Caco-2 (cell line): ENCODE measurements at regions of chrX and their contacts with region 1.

Region 1: DNA sequence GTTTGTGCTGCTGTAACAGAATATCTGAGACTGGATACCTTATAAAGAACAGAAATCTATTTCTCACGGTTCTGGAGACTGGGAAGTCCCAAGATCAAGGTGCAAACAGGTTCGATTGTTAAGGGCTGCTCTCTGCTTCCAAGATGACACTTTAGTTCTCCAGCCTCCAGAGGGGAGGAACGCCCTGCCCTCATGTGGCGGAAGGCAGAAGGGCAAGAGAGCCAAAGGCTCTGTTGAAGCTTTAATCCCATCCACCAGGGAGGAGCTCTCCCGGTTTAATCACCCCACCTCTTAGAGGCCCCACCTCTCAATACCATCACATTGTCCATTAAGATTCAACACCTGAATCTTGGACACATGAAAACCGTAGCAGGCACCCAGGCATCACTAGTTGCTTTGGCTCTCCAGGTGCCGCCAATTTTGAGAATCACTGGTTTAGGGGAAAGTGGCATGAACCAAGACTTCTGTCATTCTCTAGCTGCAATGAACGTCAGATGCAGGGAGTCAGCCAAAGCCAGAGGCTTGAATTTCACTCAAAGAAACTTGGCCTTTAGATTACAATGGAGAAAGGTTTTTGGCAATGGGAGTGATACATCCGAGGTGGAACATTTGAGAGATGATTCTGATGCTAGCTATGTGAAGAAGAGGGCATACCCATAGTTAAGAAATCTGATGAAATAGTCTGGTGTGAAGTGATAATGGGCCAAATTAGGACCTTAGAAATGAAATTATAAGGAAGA is 15.7 kb downstream of the FHL1 start:
- DNase-seq: peak; percentile 44 to 59
- H3K4me3 ChIP-seq: no peak overlapping the region
- H3K4me3 Mint-ChIP-seq: no peak overlapping the region
- H3K27ac Mint-ChIP-seq: no peak overlapping the region
- H3K4me1 ChIP-seq: no peaks in the 10 kb centered on the region
- H3K4me1 Mint-ChIP-seq: no peaks in the 10 kb centered on the region
- H3K27me3 ChIP-seq: no peaks in the 10 kb centered on the region
- H3K27me3 Mint-ChIP-seq: peaks cover 11% of the 10 kb centered on the region
- CTCF ChIP-seq: peak; percentile 41 to 71

Region 2: DNA sequence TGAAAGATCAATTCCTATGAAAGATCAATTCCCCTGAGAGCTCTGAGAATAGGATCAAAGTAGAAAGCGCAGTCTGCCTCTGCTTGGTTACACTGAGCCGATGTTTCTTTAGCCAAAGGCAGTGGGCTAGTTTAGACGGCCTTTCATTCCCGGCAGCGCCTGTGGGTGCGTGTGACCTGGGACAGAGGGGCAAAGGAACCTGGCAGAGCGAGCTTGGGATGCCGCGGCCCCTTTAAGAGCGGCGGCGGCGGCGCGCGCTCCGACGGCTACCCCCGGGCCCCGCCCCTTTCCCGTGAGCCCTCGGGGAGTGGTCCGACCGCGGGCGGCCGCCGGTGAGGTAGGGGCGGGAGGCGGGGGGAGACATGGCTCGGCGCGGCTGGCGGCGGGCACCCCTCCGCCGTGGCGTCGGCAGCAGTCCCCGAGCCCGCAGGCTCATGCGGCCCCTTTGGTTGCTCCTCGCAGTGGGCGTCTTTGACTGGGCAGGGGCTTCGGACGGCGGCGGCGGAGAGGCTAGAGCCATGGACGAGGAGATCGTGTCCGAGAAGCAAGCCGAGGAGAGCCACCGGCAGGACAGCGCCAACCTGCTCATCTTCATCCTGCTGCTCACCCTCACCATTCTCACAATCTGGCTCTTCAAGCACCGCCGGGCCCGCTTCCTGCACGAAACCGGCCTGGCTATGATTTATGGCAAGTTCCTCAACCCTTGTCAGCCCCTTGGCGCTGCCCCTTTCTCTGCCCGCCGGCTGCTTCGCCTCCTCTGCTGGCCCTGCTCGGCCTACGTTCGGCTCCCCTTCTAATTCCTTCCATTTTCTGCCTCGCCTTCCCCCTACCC is 177.6 kb before region 1 on chrX and contains the start of gene SLC9A6:
- CTCF ChIA-PET with region 1: no interaction called
- POLR2A ChIA-PET with region 1: no interaction called
- intact Hi-C with region 1: no loop called
- DNase-seq: peak; percentile 66 to 76
- H3K4me3 ChIP-seq: peak within 1 kb of the TSS; percentile 63
- H3K4me3 Mint-ChIP-seq: peak within 1 kb of the TSS; percentile 76
- H3K27ac Mint-ChIP-seq: peak within 1 kb of the TSS; percentile 73
- H3K4me1 ChIP-seq: no peaks in the 10 kb centered on the region
- H3K4me1 Mint-ChIP-seq: peaks cover 22% of the 10 kb centered on the region
- H3K27me3 ChIP-seq: no peaks in the 10 kb centered on the region
- H3K27me3 Mint-ChIP-seq: no peaks in the 10 kb centered on the region
- CTCF ChIP-seq: no peak
- total RNA-seq, gene SLC9A6: 9.9 and 11.8 TPM in 2 replicates

Region 3: DNA sequence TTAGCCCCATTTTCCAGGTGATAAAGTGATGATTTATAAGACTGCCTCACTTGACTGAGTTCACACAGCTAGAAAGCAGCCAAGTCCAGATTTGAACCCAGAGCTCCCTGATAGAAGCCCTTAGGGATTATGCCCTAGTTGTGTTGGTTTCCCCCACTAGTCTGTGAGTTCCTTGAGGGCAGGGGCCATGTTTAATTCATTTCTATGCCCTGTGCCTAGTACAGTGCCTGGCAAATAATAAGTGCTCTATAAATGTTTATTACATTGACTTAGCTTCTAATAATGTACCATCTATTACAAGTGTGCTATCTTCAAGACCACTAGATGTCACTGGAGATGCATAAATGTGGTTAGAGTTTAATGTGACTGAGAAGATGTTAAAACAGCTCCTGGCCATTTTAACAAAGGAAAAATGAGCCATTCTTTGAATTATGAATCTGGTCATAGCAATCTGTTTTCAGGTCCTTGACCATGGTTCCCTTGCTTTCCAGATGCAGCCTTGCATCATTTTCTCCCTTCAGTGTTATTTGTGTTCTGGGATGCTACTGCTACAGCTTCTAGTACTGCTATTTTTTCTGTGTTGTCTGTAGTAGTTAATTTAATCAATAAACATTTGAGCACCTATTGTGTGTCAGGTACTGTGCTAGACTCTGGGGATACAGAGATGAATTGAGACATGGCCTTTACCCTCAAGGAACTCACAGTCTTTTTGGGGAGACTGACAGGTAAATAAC is 134.6 kb before region 1 on chrX:
- CTCF ChIA-PET with region 1: interaction called, 51 read pairs
- POLR2A ChIA-PET with region 1: no interaction called
- intact Hi-C with region 1: loop called (anchors 1 kb)
- DNase-seq: peak in 1 of 2 experiments; percentile 8
- H3K4me3 ChIP-seq: no peak overlapping the region
- H3K4me3 Mint-ChIP-seq: no peak overlapping the region
- H3K27ac Mint-ChIP-seq: no peak overlapping the region
- H3K4me1 ChIP-seq: no peaks in the 10 kb centered on the region
- H3K4me1 Mint-ChIP-seq: no peaks in the 10 kb centered on the region
- H3K27me3 ChIP-seq: no peaks in the 10 kb centered on the region
- H3K27me3 Mint-ChIP-seq: no peaks in the 10 kb centered on the region
- CTCF ChIP-seq: peak in 1 of 2 experiments; percentile 13